ENCODE measurements at regions of chr2 and their contacts with region 1.

Region 1: GRCh38 chr2:237700512-237701032 is 73.2 kb downstream of the LRRFIP1 start:
- DNase-seq: peak in 5 of 9 donors; percentile 50 to 89 (median 65)
- ATAC-seq: peak; percentile 78
- H3K4me3 ChIP-seq: peak overlapping the region; percentile 23
- H3K4me3 Mint-ChIP-seq: peak overlapping the region; percentile 59 to 91 (median 76)
- H3K27ac ChIP-seq: peak overlapping the region; percentile 76
- H3K27ac Mint-ChIP-seq: peak overlapping the region; percentile 85 to 98 (median 92)
- H3K4me1 ChIP-seq: peaks cover 92 to 95% of the 10 kb centered on the region in 2 donors
- H3K4me1 Mint-ChIP-seq: peaks cover 81 to 99% (median 95%) of the 10 kb centered on the region in 7 donors
- H3K27me3 ChIP-seq: no peaks in the 10 kb centered on the region
- H3K27me3 Mint-ChIP-seq: no peaks in the 10 kb centered on the region

Region 2: DNA sequence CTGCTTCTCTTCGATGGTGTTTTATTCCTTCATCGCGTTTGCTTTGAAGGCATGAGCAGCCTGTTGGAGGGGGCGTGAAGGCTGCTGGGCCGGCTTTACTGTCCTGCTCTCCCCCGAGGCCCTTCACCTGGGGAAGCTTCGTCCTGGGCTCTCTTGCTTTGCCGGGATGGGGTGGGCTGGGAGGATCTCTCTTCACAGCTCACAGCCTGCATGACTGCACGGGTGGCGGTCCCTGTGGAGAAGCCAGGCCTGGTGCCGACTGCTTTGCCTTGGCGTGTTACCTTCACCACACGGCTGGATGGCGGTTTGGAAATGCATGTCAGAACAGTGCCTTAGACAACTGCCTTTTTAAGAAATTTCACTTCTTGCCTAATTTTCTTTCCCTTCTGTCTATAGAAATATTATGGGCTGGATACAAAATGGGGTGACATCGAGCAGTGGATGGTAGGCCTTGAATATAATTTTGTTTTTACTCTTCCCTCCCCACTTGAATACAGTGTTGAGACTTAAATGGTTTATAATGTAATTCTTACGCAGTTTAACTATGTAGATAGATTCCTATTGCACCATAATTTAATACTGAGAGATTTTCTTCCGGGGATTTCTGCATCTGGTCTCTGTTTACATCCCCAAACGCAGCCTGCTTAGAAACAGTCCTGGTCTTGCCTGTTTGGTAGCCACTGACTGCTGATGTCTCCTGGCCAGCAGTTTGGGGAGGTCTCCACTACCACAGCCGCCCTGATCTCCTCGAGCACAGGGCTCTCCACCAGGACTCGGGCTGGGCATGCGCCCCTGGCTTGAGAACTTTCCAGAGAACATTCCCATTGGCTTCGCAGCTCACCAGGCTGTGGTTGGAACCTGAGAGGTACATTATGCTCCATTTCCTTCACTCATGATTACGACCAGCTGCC is 17.0 kb after region 1 on chr2:
- CTCF ChIA-PET with region 1: interaction called, 3 read pairs
- POLR2A ChIA-PET with region 1: no interaction called
- intact Hi-C with region 1: loop called (anchors 2 kb)
- DNase-seq: no peak
- ATAC-seq: no peak
- H3K4me3 ChIP-seq: no peak overlapping the region
- H3K4me3 Mint-ChIP-seq: no peak overlapping the region
- H3K27ac ChIP-seq: no peak overlapping the region
- H3K27ac Mint-ChIP-seq: peak overlapping the region in 7 of 9 donors; percentile 16 to 81 (median 56)
- H3K4me1 ChIP-seq: peaks cover 0 to 10% of the 10 kb centered on the region in 2 donors
- H3K4me1 Mint-ChIP-seq: peaks cover 44 to 90% (median 79%) of the 10 kb centered on the region in 7 donors
- H3K27me3 ChIP-seq: no peaks in the 10 kb centered on the region
- H3K27me3 Mint-ChIP-seq: no peaks in the 10 kb centered on the region

Measured in naive thymus-derived CD4-positive, alpha-beta T cell (primary cell).